ENCODE measurements at regions of chr1 and their contacts with region 1.

Region 1: DNA sequence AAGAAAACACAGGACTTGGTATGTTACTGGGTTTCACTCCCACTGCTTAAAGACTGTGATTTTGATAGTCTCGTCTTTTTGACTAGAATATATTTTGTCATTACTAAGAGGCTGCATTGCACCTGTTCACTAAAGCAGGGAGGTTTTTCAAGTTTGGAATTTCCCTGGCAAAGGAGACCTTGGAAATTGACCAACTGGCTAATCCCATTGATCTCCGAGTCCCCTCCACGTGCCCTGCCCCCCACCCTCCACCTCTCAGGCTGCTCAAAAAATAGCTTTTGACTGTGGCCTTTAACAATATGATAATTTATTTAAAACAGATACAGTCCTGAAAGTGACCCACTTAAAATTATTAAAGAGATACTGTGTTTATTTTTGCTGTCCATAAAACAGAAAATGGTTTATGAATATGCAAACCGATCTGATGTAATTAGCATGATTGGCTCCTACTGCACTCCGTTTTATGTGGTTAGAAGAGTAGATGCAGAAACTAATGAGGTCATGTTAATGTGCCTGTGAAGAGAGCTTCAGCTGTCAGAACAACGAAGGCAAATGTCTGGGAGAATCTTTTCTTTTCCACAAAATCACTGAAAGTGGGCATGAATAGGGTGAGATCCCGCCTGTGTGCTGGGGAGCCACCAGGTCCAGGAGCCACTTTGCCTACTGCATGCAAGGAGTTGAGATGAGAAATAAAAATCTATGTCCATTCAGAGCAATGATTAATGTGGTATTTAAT is 361.5 kb downstream of the RRAGC start:
- DNase-seq: no peak

Region 2: DNA sequence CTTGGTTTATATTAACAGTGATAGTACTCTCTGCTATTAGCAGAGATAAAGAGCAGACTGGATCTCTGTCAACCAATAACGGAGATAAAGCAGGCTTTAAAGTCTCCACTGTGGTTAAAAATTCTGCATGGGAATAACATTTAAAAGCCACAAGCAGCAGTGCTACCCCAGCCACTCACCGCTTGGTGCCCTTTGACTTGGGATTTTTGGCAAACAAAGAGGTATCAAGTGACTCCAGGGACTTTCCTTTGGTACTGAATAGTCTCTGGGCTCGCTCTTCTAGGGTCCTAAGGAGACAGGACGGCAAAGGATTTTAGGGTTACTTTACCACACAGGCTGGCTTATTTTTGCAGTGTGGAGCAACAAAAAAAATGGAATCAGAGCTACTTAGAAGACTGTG is 519.5 kb before region 1 on chr1:
- intact Hi-C with region 1: no loop called
- DNase-seq: no peak

Region 3: DNA sequence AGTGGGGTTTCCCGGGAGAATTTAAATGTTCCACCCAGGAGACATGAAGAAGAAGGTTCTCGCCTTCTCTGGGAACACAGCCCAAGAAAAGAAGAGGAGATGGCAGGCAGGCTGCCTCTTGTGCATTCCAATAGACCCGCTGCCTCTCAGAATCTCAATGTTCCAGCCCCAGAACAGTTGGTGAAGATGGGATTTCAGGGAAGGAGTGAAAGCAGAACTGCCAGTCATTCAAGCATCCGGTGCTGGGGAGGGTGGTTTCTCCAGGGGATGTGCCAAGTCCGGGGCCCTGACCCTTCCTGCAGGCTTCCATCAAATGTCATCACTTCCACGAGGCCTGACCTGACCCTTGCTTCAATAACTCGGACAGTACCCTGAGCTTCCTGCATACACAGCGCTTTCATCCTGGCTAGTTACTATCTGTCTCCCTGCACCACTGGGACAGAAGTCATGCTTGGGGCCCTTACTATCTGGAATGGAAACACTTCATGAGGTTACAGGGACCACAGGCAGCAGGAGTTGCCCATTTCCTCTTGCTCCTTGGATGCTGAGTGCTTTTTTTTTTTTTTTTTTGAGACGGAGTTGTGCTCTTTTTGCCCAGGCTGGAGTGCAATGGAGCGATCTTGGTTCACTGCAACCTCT is 64.9 kb before region 1 on chr1:
- intact Hi-C with region 1: loop called in 1 of 2 experiments (anchors 2 kb)
- DNase-seq: no peak

Region 4: DNA sequence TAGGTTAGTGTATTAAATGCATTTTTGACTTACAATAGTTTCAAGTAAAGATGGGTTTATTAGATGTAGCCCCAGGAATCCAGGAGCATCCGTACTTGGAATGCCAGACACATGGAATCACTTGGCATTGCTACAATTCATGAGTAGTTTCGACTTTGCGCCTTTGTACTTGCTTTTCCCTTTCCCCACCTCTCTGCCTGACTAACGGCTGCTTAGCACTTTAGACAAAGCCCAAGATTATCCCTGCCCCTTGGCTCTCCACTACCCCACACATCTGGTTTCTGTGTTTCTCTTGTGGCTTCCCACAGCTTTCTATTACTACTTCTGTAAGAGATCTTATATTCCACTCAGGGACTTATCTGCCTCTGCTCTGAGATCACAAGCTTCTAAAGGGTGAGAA is 53.8 kb before region 1 on chr1:
- intact Hi-C with region 1: no loop called
- DNase-seq: no peak